IMR-90 (cell line): ENCODE measurements at regions of chr13 and their contacts with region 1.

Region 1: DNA sequence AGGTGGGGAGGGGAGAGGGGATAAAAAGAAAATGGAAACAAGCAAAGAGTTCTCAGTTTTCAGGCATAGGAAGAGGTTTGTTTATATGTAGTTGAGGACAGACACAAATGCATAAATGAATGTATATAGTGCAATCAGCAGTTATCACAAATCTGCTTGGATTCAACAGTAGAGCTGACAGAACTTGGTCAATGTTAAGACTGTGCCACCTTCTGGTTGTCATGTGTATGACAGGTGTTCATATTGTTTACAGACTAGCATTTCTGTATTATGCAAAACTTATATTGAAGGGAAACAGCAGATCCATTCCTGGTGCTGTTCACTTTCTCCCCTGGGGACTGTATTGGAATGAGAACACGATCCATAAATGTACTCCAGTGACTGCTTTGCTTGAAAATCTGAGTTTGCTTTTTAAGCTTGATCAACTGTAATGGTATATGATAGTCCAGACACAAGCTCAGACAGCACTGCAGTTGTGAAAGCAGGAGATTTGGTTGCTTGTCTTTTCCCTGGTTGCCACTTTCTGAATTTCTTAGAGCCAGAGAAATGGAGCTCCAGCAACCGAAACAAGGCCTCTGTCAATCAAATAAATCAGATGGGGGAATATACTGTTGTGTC is 319.5 kb upstream of the OBI1 start:
- DNase-seq: peak; percentile 61
- ATAC-seq: peak; percentile 81
- H3K4me3 ChIP-seq: no peak overlapping the region
- H3K27ac ChIP-seq: no peak overlapping the region
- H3K4me1 ChIP-seq: no peaks in the 10 kb centered on the region
- H3K27me3 ChIP-seq: no peaks in the 10 kb centered on the region
- CTCF ChIP-seq: peak; percentile 64
- POLR2A ChIP-seq: no peak
- RAD21 ChIP-seq: peak; percentile 63

Region 2: GRCh38 chr13:77779552-77780272 is 1198.8 kb before region 1 on chr13:
- CTCF ChIA-PET with region 1: no interaction called
- POLR2A ChIA-PET with region 1: no interaction called
- dilution Hi-C with region 1: no loop called
- in situ Hi-C with region 1: loop called (anchors 25 kb)
- intact Hi-C with region 1: loop called (anchors 10 kb)
- DNase-seq: peak; percentile 74
- ATAC-seq: peak; percentile 94
- H3K4me3 ChIP-seq: no peak overlapping the region
- H3K27ac ChIP-seq: no peak overlapping the region
- H3K4me1 ChIP-seq: 0 out of 2 replicates have a peak, but pooled peaks cover 2% of the 10 kb centered on the region
- H3K27me3 ChIP-seq: peaks cover 2% of the 10 kb centered on the region; the same call in 1 of the 2 replicates
- CTCF ChIP-seq: peak; percentile 80
- POLR2A ChIP-seq: no peak
- RAD21 ChIP-seq: peak; percentile 79

Region 3: GRCh38 chr13:78241278-78241919 is 737.1 kb before region 1 on chr13:
- CTCF ChIA-PET with region 1: interaction called, 8 read pairs
- POLR2A ChIA-PET with region 1: no interaction called
- dilution Hi-C with region 1: no loop called
- in situ Hi-C with region 1: no loop called
- intact Hi-C with region 1: loop called (anchors 1 kb)
- DNase-seq: peak; percentile 11
- ATAC-seq: peak; percentile 49
- H3K4me3 ChIP-seq: no peak overlapping the region
- H3K27ac ChIP-seq: no peak overlapping the region
- H3K4me1 ChIP-seq: no peaks in the 10 kb centered on the region
- H3K27me3 ChIP-seq: peaks cover 1% of the 10 kb centered on the region
- CTCF ChIP-seq: peak; percentile 50
- POLR2A ChIP-seq: no peak
- RAD21 ChIP-seq: peak; percentile 50

Region 4: GRCh38 chr13:78317030-78317429 is 661.5 kb before region 1 on chr13:
- CTCF ChIA-PET with region 1: no interaction called
- POLR2A ChIA-PET with region 1: no interaction called
- dilution Hi-C with region 1: no loop called
- in situ Hi-C with region 1: no loop called
- intact Hi-C with region 1: loop called (anchors 5 kb)
- DNase-seq: no peak
- ATAC-seq: no peak
- H3K4me3 ChIP-seq: no peak overlapping the region
- H3K27ac ChIP-seq: no peak overlapping the region
- H3K4me1 ChIP-seq: no peaks in the 10 kb centered on the region
- H3K27me3 ChIP-seq: no peaks in the 10 kb centered on the region
- CTCF ChIP-seq: no peak; the same call in 1 of the 2 replicates
- POLR2A ChIP-seq: no peak
- RAD21 ChIP-seq: no peak

Region 5: DNA sequence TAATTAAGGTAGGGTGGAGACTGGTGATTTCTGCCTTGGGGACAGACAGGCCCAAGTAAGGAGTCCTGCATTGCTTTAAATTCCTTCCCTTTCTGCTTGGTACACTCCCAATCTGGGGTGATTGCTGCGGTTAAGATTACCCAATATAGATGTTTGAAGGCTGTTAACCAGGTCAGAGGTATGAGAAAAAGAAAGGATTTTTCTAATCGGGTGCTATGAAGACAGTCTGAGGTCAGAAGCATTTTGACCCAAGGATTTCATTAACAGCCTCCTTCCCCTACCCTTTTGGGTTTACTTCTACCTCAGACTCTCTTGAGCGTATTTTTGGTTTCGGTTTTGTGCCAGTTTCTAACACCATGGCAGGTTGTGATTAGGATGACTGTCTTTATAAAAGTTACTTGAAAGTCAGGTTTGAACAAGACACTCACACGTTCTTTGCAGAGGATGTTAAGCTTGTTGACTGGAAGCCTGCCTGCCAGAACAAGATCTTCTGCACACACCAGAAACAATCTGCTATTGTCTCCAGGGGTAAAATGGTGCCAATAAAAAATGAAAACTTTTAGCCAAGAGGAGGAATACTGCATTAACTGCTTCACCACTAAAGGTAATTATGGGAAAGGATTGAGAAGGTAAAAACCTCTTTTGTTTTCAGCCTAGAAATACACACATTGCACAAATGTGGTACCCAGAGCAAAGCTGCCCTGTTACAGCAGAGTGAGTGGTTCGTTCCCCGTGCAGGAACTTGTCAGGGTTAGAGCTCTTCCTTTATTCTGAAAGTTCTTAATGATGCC is 611.3 kb after region 1 on chr13:
- CTCF ChIA-PET with region 1: no interaction called
- POLR2A ChIA-PET with region 1: no interaction called
- dilution Hi-C with region 1: no loop called
- in situ Hi-C with region 1: no loop called
- intact Hi-C with region 1: no loop called
- DNase-seq: no peak
- ATAC-seq: peak; percentile 32; the same call in 1 of the 2 replicates
- H3K4me3 ChIP-seq: no peak overlapping the region
- H3K27ac ChIP-seq: no peak overlapping the region
- H3K4me1 ChIP-seq: no peaks in the 10 kb centered on the region
- H3K27me3 ChIP-seq: no peaks in the 10 kb centered on the region
- CTCF ChIP-seq: no peak
- POLR2A ChIP-seq: no peak
- RAD21 ChIP-seq: no peak